IMR-90 (cell line): ENCODE measurements at regions of chr1 and their contacts with region 1.

Region 1: GRCh38 chr1:55194851-55195250 is 20.3 kb downstream of the USP24 start:
- DNase-seq: no peak
- ATAC-seq: no peak
- H3K4me3 ChIP-seq: no peak overlapping the region
- H3K27ac ChIP-seq: no peak overlapping the region
- H3K4me1 ChIP-seq: peaks cover 7% of the 10 kb centered on the region
- H3K27me3 ChIP-seq: no peaks in the 10 kb centered on the region
- CTCF ChIP-seq: no peak
- POLR2A ChIP-seq: no peak
- RAD21 ChIP-seq: no peak

Region 2: GRCh38 chr1:54721719-54722118 is 473.1 kb before region 1 on chr1:
- CTCF ChIA-PET with region 1: no interaction called
- POLR2A ChIA-PET with region 1: no interaction called
- dilution Hi-C with region 1: no loop called
- in situ Hi-C with region 1: no loop called
- intact Hi-C with region 1: no loop called
- DNase-seq: no peak
- ATAC-seq: no peak
- H3K4me3 ChIP-seq: no peak overlapping the region
- H3K27ac ChIP-seq: no peak overlapping the region
- H3K4me1 ChIP-seq: no peaks in the 10 kb centered on the region
- H3K27me3 ChIP-seq: no peaks in the 10 kb centered on the region
- CTCF ChIP-seq: no peak
- POLR2A ChIP-seq: no peak
- RAD21 ChIP-seq: no peak

Region 3: DNA sequence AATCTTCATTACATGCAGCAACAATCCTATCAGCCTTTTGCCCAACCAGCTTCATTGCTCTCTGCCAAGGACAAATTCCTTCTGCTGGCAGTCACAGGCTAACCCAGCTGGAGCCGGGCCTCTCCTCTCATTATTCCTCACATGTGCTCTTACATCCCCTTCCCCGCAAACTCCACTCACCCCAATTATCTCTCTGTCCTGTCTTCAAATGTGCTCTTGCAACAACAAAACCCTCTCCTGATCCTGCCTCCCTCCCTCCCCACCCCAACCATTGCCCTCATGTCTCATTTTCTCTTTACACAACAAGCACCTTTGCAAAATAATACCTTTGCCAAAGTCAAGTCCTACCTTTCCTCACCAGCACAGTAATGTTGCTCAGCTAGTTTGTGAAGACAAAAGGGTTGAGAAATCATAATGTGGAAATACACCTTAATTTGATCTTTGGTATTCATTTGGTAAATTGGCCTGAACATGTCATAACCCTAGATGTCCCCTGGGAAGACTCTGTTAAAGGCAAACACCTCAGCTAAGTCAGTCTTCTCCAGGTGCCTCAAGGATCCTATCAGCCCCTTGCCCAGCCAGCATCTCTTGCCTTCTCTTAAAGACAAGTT is 271.8 kb before region 1 on chr1:
- CTCF ChIA-PET with region 1: no interaction called
- POLR2A ChIA-PET with region 1: no interaction called
- dilution Hi-C with region 1: no loop called
- in situ Hi-C with region 1: no loop called
- intact Hi-C with region 1: no loop called
- DNase-seq: no peak
- ATAC-seq: no peak
- H3K4me3 ChIP-seq: no peak overlapping the region
- H3K27ac ChIP-seq: no peak overlapping the region
- H3K4me1 ChIP-seq: peaks cover 3% of the 10 kb centered on the region
- H3K27me3 ChIP-seq: peaks cover 21% of the 10 kb centered on the region
- CTCF ChIP-seq: no peak
- POLR2A ChIP-seq: no peak
- RAD21 ChIP-seq: no peak

Region 4: DNA sequence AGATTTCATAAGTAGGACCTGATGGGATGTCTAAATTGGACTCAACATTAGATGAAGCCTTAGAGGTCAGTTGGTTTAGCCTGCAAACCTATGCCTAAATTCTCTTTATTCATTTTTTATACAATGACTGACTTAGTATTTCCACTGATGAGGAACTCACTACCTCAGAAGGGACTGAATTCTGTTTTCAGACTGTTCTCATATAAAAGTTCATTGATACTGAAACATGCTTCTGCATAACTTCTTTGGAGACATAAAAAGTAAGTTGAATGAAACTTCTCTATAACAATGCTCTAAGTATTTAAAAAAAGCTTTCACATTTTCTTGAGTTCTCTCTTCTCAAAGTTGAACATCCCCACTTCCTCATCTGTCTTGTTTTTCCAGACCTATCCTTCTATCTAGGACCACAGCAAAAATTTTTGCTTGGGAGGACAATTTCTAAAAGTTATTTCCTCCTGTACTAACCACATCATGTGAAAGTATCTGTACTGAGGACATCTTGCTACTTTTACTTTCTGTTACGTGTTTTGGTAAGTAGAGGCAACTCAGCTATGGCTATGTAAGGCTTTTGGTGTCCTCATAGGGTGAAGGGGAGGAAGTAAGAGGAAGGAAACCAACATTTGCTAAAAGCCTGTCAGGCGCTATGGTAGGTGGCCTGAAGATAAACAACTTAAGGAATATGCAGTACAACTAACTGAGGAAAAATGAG is 43.8 kb before region 1 on chr1:
- CTCF ChIA-PET with region 1: no interaction called
- POLR2A ChIA-PET with region 1: no interaction called
- dilution Hi-C with region 1: no loop called
- in situ Hi-C with region 1: no loop called
- intact Hi-C with region 1: loop called (anchors 5 kb)
- DNase-seq: no peak
- ATAC-seq: peak; percentile 42
- H3K4me3 ChIP-seq: no peak overlapping the region
- H3K27ac ChIP-seq: no peak overlapping the region
- H3K4me1 ChIP-seq: peaks cover 2% of the 10 kb centered on the region
- H3K27me3 ChIP-seq: no peaks in the 10 kb centered on the region
- CTCF ChIP-seq: no peak
- POLR2A ChIP-seq: no peak
- RAD21 ChIP-seq: no peak

Region 5: DNA sequence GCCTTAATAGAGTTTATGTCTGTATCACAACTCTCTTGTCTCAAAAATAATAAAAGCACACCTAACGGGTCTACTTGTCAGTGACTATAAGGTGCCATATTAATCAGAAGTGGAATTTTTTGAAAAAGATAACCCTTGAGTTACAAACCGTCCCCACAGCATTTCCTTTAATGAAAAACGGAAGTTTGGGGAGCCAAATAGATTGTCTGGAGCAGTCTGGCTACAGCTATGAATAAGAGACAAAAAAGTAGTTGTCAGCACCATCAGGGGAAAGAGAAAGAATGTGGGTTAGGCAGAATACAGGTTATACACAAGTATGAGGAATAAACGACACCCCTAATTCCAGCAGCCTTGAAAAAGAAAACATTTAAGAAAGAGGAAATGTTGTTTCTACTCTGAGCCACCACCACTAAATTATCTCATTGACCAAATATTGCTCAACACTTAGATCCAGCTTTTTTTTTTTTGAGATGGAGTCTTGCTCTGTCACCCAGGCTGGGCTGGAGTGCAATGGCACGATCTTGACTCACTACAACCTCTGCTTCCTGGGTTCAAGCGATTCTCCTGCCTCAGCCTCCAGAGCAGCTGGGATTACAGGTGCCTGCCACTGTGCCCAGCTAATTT is 49.7 kb after region 1 on chr1:
- CTCF ChIA-PET with region 1: no interaction called
- POLR2A ChIA-PET with region 1: no interaction called
- dilution Hi-C with region 1: no loop called
- in situ Hi-C with region 1: no loop called
- intact Hi-C with region 1: no loop called
- DNase-seq: peak; percentile 43
- ATAC-seq: peak; percentile 53
- H3K4me3 ChIP-seq: no peak overlapping the region
- H3K27ac ChIP-seq: no peak overlapping the region
- H3K4me1 ChIP-seq: peaks cover 2% of the 10 kb centered on the region; the same call in 1 of the 2 replicates
- H3K27me3 ChIP-seq: no peaks in the 10 kb centered on the region
- CTCF ChIP-seq: no peak
- POLR2A ChIP-seq: no peak
- RAD21 ChIP-seq: no peak

Region 6: DNA sequence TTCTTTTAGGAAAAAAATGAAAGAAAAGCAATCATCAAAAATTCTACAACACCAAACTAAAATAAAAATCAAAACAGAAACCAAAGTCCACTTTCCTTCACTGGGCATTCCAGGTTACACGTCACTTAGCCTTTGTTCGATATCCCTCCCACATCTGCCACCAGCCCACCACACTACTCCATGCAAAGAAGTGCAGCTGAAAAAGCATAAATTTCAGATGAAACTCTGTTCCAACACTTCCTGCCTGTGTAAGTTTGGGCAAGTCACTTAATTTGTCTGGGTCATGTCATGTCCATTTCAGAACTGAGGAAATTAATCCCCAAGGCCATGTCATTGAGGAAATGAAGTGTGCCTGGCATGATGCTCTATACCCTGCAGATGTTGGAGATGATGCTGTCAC is 374.6 kb after region 1 on chr1:
- CTCF ChIA-PET with region 1: no interaction called
- POLR2A ChIA-PET with region 1: no interaction called
- dilution Hi-C with region 1: no loop called
- in situ Hi-C with region 1: no loop called
- intact Hi-C with region 1: no loop called
- DNase-seq: no peak
- ATAC-seq: no peak
- H3K4me3 ChIP-seq: no peak overlapping the region
- H3K27ac ChIP-seq: no peak overlapping the region
- H3K4me1 ChIP-seq: peaks cover 6% of the 10 kb centered on the region
- H3K27me3 ChIP-seq: no peaks in the 10 kb centered on the region
- CTCF ChIP-seq: no peak
- POLR2A ChIP-seq: no peak
- RAD21 ChIP-seq: no peak